Activated naive CD8-positive, alpha-beta T cell treated with anti-CD3 and anti-CD28 coated beads, Interleukin-2, amount 10 ng/mL, durations not matched to agents 7 days and 5 days (primary cell): ENCODE measurements at regions of chr17 and their contacts with region 1.

Region 1: GRCh38 chr17:75535119-75535537 is 9.6 kb downstream of the LLGL2 start:
- DNase-seq: peak; percentile 70
- ATAC-seq: peak; percentile 99
- H3K4me3 Mint-ChIP-seq: peak overlapping the region; percentile 64
- H3K27ac Mint-ChIP-seq: peak overlapping the region; percentile 89
- H3K4me1 Mint-ChIP-seq: peaks cover 17% of the 10 kb centered on the region
- H3K27me3 Mint-ChIP-seq: peaks cover 1% of the 10 kb centered on the region

Region 2: GRCh38 chr17:75563063-75563758 is 28.1 kb after region 1 on chr17:
- POLR2A ChIA-PET with region 1: no interaction called
- DNase-seq: no peak
- ATAC-seq: no peak
- H3K4me3 Mint-ChIP-seq: no peak overlapping the region
- H3K27ac Mint-ChIP-seq: no peak overlapping the region
- H3K4me1 Mint-ChIP-seq: no peaks in the 10 kb centered on the region
- H3K27me3 Mint-ChIP-seq: no peaks in the 10 kb centered on the region

Region 3: GRCh38 chr17:75589012-75589918 is 54.1 kb after region 1 on chr17:
- POLR2A ChIA-PET with region 1: interaction called, 10 read pairs
- DNase-seq: peak; percentile 99
- ATAC-seq: peak; percentile 77
- H3K4me3 Mint-ChIP-seq: peak overlapping the region; percentile 81
- H3K27ac Mint-ChIP-seq: peak overlapping the region; percentile 72
- H3K4me1 Mint-ChIP-seq: peaks cover 5% of the 10 kb centered on the region
- H3K27me3 Mint-ChIP-seq: peaks cover 25% of the 10 kb centered on the region

Region 4: GRCh38 chr17:75652915-75653549 is 117.9 kb after region 1 on chr17:
- POLR2A ChIA-PET with region 1: no interaction called
- DNase-seq: no peak
- ATAC-seq: peak; percentile 87
- H3K4me3 Mint-ChIP-seq: no peak overlapping the region
- H3K27ac Mint-ChIP-seq: peak overlapping the region; percentile 65
- H3K4me1 Mint-ChIP-seq: peaks cover 11% of the 10 kb centered on the region
- H3K27me3 Mint-ChIP-seq: no peaks in the 10 kb centered on the region